Common myeloid progenitor, CD34-positive (primary cell): ENCODE measurements at regions of chr16 and their contacts with region 1.

Region 1: DNA sequence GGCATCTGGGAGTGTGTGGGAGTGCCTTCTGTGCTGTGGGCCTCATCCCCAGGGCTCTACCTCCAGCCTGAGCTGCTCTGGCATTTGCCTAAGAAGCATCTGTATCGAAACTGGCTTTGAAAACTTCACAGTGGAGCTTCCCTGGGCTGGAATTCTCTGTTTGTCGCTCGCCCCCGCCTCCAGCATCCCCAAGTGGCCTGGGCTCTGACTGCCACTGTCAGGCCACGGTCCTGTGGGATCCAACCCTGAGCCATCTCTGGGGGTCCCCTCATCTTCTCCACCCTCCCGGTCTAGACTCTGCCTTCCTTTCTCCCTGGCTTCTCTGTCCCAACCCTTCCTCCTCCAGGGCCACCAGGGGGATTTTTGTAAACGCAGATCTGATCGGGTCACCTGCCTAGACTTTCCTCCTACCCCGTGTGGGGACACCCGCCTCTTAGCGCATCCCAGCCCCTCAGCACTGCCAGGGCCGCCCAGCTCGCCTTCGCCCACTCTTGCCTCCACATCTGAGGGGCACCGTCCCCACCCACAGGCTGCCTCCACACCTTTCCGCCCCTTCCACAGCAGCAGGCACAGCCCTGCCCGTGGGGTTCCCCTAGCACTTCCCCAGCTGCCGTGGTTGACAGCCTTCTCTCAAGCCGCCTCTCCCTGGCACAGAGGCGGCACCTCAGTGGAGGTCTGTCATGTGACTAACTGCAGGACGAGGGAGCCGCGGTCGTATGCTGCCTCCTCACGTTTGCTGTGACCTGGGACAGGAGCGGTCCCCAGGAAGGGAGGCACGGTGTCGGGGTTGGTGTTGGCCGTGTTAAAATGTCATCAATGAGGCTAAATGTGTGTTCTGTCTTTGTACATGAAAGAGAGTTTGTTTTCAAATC is 12.0 kb downstream of the TBC1D24 start:
- DNase-seq: peak; percentile 75 to 89 (median 87)
- H3K4me3 ChIP-seq: peak overlapping the region in 3 of 7 experiments; percentile 0 to 67 (median 11)
- H3K27ac ChIP-seq: no peak overlapping the region
- H3K4me1 ChIP-seq: peaks cover 2 to 41% (median 34%) of the 10 kb centered on the region in 4 experiments
- H3K27me3 ChIP-seq: no peaks in the 10 kb centered on the region

Region 2: GRCh38 chr16:2429034-2429770 is 57.7 kb before region 1 on chr16 and contains the start of gene CCNF:
- CTCF ChIA-PET with region 1: interaction called, 11 read pairs
- POLR2A ChIA-PET with region 1: interaction called, 6 read pairs
- DNase-seq: peak; percentile 93 to 97 (median 96)
- H3K4me3 ChIP-seq: peak within 1 kb of the TSS; percentile 68 to 89 (median 77)
- H3K27ac ChIP-seq: peak within 1 kb of the TSS in 1 of 2 experiments; percentile 49
- H3K4me1 ChIP-seq: peaks cover 0 to 27% (median 22%) of the 10 kb centered on the region in 4 experiments
- H3K27me3 ChIP-seq: no peaks in the 10 kb centered on the region

Region 3: GRCh38 chr16:2474877-2475412 is 11.9 kb before region 1 on chr16 and contains the start of gene TBC1D24:
- CTCF ChIA-PET with region 1: interaction called, 19 read pairs
- POLR2A ChIA-PET with region 1: interaction called, 15 read pairs
- DNase-seq: peak; percentile 72 to 83 (median 78)
- H3K4me3 ChIP-seq: peak within 1 kb of the TSS; percentile 47 to 82 (median 73)
- H3K27ac ChIP-seq: peak within 1 kb of the TSS in 1 of 2 experiments; percentile 77
- H3K4me1 ChIP-seq: peaks cover 4 to 43% (median 40%) of the 10 kb centered on the region in 4 experiments
- H3K27me3 ChIP-seq: peaks cover 0 to 36% (median 13%) of the 10 kb centered on the region in 5 experiments